CD4-positive, alpha-beta T cell (primary cell): ENCODE measurements at regions of chr22 and their contacts with region 1.

Region 1: DNA sequence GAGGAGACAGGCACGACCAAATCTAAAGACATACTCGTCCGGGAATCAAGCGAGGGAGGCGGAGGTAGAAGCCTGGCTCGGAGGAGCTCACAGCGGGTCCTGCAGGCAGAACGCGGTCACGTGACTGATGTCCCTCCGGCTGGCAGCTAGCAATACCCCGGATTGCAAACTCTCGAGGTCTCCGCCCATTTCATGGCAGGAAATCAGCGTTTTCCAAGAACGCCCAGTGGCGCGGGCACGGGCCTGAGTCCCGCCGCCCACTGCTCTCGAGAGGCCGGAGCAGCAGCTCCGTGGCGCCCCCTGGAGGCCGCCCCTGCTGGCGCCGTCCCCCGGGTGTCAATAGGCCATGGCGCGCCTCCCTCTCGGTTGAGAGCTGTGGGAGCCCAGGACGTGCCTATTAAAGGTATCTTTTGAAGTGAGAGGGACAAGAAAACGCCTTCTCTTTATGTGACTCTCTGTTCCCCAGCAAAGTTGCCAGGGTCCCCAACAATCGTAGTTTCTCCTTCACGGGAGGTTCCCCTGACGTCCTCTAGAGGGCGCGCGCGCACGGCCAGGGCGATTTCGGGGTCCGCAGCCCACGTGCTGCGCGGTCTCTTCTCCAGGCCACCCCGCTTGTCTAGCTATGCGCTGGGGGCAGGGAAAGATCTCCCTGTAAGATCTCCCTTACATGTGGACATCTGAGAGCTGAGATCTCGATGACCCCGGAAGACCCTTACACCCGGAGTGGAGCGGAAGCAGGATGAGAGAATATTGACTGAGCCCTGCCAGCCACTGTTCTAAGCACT is 37.3 kb upstream of the RBFOX2 start:
- DNase-seq: peak; percentile 34 to 79 (median 52)
- ATAC-seq: peak; percentile 86
- H3K4me3 ChIP-seq: peak overlapping the region; percentile 50
- H3K4me3 Mint-ChIP-seq: peak overlapping the region; percentile 85
- H3K27ac ChIP-seq: no peak overlapping the region
- H3K27ac Mint-ChIP-seq: no peak overlapping the region
- H3K4me1 ChIP-seq: peaks cover 17% of the 10 kb centered on the region
- H3K4me1 Mint-ChIP-seq: peaks cover 5% of the 10 kb centered on the region
- H3K27me3 ChIP-seq: no peaks in the 10 kb centered on the region
- H3K27me3 Mint-ChIP-seq: no peaks in the 10 kb centered on the region
- CTCF ChIP-seq: peak; percentile 100

Region 2: GRCh38 chr22:36028646-36029405 is 37.1 kb before region 1 on chr22 and contains the start of gene RBFOX2:
- CTCF ChIA-PET with region 1: interaction called, 15 read pairs
- POLR2A ChIA-PET with region 1: no interaction called
- intact Hi-C with region 1: loop called in 1 of 2 experiments (anchors 2 kb)
- DNase-seq: peak; percentile 31 to 80 (median 56)
- ATAC-seq: peak; percentile 74
- H3K4me3 ChIP-seq: peak within 1 kb of the TSS; percentile 61
- H3K4me3 Mint-ChIP-seq: peak within 1 kb of the TSS; percentile 88
- H3K27ac ChIP-seq: no peak within 1 kb of the TSS
- H3K27ac Mint-ChIP-seq: peak within 1 kb of the TSS; percentile 11
- H3K4me1 ChIP-seq: peaks cover 14% of the 10 kb centered on the region
- H3K4me1 Mint-ChIP-seq: peaks cover 26% of the 10 kb centered on the region
- H3K27me3 ChIP-seq: peaks cover 0 to 4% of the 10 kb centered on the region in 2 experiments
- H3K27me3 Mint-ChIP-seq: peaks cover 4% of the 10 kb centered on the region
- CTCF ChIP-seq: no peak
- total RNA-seq, gene RBFOX2: 1.9 to 2.4 TPM

Region 3: DNA sequence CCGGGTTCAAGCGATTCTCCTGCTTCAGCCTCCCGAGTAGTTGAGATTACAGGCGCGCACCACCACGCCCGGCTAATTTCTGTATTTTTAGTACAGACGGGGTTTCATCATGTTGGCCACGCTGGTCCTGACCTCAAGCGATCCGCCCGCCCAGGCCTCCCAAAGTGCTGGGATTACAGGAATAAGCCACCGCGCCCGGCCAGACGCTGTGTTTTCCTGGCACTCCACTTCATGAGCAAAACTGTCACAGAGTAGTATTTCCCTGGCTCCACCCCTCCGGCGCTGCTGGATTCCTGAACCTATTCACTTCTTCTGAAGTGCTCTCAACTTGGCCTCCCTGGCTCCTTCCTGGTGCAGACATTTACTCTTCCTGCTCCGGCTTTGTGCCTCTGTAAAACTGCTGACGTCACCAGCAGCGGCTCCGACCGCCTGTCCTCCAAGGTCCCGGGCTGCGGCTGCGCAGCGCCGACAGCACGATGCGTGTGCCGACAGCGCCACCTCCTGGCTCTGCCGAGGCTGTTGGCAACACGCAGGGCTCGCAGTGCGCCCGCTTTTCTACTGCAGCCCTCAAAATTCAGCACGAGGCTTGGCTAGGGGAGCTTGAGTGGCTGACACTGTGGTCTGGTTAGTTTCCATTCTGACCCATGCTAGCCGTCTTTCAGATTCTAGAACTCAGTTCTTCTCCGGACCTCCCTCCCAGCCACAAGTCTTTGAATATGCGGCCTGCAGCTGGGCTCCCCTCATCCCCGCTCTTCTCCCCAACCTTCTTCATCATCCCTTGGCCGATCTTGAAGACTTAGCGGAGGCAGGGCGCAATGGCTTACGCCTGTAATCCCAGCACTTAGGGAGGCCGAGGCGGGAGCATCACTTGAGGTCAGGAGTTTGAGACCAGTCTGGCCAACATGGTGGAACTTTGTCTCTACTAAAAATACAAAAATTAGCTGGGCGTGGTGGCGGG is 58.0 kb after region 1 on chr22:
- CTCF ChIA-PET with region 1: interaction called, 7 read pairs
- POLR2A ChIA-PET with region 1: no interaction called
- intact Hi-C with region 1: loop called in 1 of 2 experiments (anchors 1 kb)
- DNase-seq: peak; percentile 87 to 98 (median 92)
- ATAC-seq: peak; percentile 97
- H3K4me3 ChIP-seq: peak overlapping the region; percentile 47
- H3K4me3 Mint-ChIP-seq: peak overlapping the region; percentile 60
- H3K27ac ChIP-seq: peak overlapping the region in 1 of 2 donors; percentile 32
- H3K27ac Mint-ChIP-seq: peak overlapping the region; percentile 70
- H3K4me1 ChIP-seq: peaks cover 13% of the 10 kb centered on the region
- H3K4me1 Mint-ChIP-seq: peaks cover 8% of the 10 kb centered on the region
- H3K27me3 ChIP-seq: no peaks in the 10 kb centered on the region
- H3K27me3 Mint-ChIP-seq: no peaks in the 10 kb centered on the region
- CTCF ChIP-seq: peak; percentile 97